ENCODE measurements at regions of chr1 and their contacts with region 1.

Region 1: GRCh38 chr1:243230914-243231313 is 24.2 kb downstream of the CEP170 start:
- DNase-seq: peak; percentile 21
- H3K4me3 ChIP-seq: no peak overlapping the region
- H3K27ac ChIP-seq: no peak overlapping the region
- H3K4me1 ChIP-seq: no peaks in the 10 kb centered on the region
- H3K27me3 ChIP-seq: no peaks in the 10 kb centered on the region
- CTCF ChIP-seq: no peak

Region 2: DNA sequence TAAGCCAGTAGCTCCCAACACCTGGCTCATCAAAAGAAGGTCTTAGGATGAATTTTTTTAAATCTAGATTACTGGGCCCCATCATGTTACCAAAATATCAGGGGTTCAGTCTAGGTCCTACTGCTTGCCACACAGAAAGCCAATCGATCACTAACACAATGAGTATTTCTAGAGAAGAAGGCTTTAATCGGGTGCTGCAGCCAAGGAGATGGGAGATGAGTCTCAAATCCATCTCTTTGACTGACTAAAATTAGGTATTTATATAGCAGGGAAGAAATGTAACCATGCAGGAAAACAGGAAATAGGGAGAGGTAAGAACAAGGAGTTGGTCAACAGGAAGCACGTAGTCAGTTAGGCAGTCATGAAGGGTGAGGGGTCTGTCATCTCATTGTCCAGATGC is 264.0 kb before region 1 on chr1:
- CTCF ChIA-PET with region 1: no interaction called
- POLR2A ChIA-PET with region 1: no interaction called
- intact Hi-C with region 1: no loop called
- DNase-seq: no peak
- H3K4me3 ChIP-seq: no peak overlapping the region
- H3K27ac ChIP-seq: no peak overlapping the region
- H3K4me1 ChIP-seq: no peaks in the 10 kb centered on the region
- H3K27me3 ChIP-seq: no peaks in the 10 kb centered on the region
- CTCF ChIP-seq: no peak

Region 3: DNA sequence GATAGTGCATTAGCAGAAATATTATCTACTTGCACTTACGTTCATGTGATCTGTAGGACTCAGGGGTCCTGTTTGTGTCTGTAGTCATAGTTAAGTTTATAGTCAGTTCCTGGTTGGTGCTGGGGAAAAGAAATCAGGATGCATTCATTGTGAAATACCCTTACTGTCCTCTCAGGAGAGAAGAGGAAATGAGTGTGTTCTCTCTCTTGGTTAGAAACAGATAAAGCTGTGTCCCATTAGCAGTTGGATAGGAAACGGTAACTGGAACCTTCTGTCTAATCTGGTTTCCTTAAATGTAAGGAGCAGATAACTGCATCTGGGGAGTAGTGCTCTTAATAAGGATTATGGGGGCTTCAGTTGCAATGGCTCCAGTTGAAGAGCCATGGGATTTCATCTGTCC is 33.8 kb after region 1 on chr1:
- CTCF ChIA-PET with region 1: no interaction called
- POLR2A ChIA-PET with region 1: no interaction called
- intact Hi-C with region 1: no loop called
- DNase-seq: peak; percentile 40
- H3K4me3 ChIP-seq: no peak overlapping the region
- H3K27ac ChIP-seq: peak overlapping the region; percentile 30
- H3K4me1 ChIP-seq: no peaks in the 10 kb centered on the region
- H3K27me3 ChIP-seq: no peaks in the 10 kb centered on the region
- CTCF ChIP-seq: no peak

Region 4: GRCh38 chr1:244163861-244164562 is 933.1 kb after region 1 on chr1:
- CTCF ChIA-PET with region 1: no interaction called
- POLR2A ChIA-PET with region 1: interaction called, 11 read pairs
- intact Hi-C with region 1: no loop called
- DNase-seq: peak; percentile 89
- H3K4me3 ChIP-seq: no peak overlapping the region
- H3K27ac ChIP-seq: peak overlapping the region; percentile 67
- H3K4me1 ChIP-seq: peaks cover 15% of the 10 kb centered on the region
- H3K27me3 ChIP-seq: no peaks in the 10 kb centered on the region
- CTCF ChIP-seq: no peak

Measured in A673 (cell line).